Ascending aorta (tissue), 2 donors: ENCODE measurements at regions of chr13 and their contacts with region 1.

Region 1: DNA sequence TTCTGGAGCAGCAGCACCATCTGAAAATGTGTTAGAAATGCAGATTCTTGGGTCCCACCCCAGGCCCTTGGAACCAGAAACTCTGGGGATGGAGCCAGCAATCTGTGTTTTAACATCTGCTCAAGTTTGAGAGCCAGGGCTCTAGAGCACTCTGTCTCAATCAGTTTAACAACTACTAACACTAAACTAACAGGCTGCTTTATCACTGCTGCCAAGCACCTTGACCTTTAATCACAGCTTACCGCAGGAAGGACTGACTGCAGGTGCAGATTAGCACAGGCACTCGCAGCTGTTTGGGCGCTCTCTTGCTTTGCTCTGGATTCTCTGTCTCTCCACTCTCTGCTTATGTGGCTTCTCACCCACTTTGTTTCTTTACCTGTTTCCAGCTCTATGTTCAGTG is 163.5 kb downstream of the MTUS2 start:
- DNase-seq: no peak
- H3K4me3 ChIP-seq: peak overlapping the region in 1 of 2 donors; percentile 37
- H3K27ac ChIP-seq: peak overlapping the region; percentile 60 to 75
- H3K4me1 ChIP-seq: peaks cover 10 to 47% of the 10 kb centered on the region in 2 donors
- H3K27me3 ChIP-seq: no peaks in the 10 kb centered on the region
- CTCF ChIP-seq: no peak

Region 2: GRCh38 chr13:28510542-28510941 is 473.1 kb before region 1 on chr13:
- intact Hi-C with region 1: no loop called
- DNase-seq: no peak
- H3K4me3 ChIP-seq: no peak overlapping the region
- H3K27ac ChIP-seq: no peak overlapping the region
- H3K4me1 ChIP-seq: no peaks in the 10 kb centered on the region
- H3K27me3 ChIP-seq: no peaks in the 10 kb centered on the region
- CTCF ChIP-seq: no peak

Region 3: GRCh38 chr13:28953714-28954418 is 29.8 kb before region 1 on chr13:
- intact Hi-C with region 1: loop called (anchors 5 kb)
- DNase-seq: no peak
- H3K4me3 ChIP-seq: no peak overlapping the region
- H3K27ac ChIP-seq: no peak overlapping the region
- H3K4me1 ChIP-seq: no peaks in the 10 kb centered on the region
- H3K27me3 ChIP-seq: no peaks in the 10 kb centered on the region
- CTCF ChIP-seq: no peak

Region 4: DNA sequence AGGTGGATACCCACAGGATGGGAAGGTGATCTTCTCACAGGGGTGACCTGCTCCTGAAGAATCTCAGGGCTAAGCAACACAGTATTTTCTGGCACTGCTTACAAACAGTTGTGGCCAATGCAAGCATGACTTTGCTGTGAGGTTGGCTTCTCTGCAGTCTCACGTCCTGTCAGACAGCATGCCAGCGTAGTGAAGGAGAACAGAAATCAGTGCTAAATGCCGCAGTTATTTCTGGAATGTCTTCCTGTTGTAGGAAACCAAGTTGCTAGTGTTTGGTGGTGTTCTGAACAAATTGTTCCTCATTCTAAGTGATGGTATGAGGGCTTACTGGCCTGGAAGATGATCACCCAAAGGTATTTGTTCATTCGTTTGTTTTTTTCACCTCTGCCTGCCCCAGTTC is 156.6 kb after region 1 on chr13:
- intact Hi-C with region 1: loop called (anchors 5 kb)
- DNase-seq: peak; percentile 25 to 92
- H3K4me3 ChIP-seq: peak overlapping the region; percentile 33 to 61
- H3K27ac ChIP-seq: peak overlapping the region; percentile 74 to 84
- H3K4me1 ChIP-seq: peaks cover 0 to 10% of the 10 kb centered on the region in 2 donors
- H3K27me3 ChIP-seq: no peaks in the 10 kb centered on the region
- CTCF ChIP-seq: no peak

Region 5: DNA sequence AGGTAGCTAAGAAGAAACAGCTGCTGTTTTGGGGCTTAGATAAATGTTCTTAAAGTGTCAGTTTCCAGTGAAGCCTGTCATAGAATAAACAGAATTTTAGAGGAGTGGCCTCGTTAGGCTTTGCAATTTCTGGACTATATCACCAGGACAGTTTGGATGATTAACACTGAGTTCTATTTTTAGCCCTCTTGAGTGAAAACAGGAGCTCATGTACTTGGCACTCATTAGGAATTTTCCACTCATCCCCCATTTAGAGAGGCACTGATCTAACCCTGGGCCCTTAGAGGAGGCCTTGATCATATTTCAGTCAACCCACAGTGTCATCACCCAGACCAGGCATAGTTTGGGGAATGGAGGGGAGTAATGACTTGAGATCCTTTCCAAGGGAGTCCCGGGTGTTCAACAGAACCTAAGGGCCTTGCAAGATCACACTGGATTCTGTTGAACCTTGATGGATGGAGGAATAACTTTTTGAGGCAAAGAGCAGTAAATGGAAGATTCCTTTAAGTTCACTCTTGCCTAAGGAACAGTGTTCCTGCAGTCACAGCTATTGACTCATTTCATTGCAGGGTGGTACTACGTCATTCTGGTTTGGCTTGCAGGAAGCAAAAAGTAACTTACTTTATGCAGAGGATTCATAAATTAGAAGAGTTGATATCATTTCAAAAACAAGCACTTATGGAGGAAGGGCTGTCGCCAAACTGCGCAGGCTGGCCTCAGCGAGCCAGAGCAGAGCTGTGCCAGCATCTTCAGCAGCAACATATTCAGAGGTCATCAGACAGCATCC is 451.7 kb after region 1 on chr13:
- intact Hi-C with region 1: loop called (anchors 5 kb)
- DNase-seq: peak in 1 of 2 donors; percentile 63
- H3K4me3 ChIP-seq: no peak overlapping the region
- H3K27ac ChIP-seq: peak overlapping the region; percentile 88 to 90
- H3K4me1 ChIP-seq: peaks cover 22 to 59% of the 10 kb centered on the region in 2 donors
- H3K27me3 ChIP-seq: no peaks in the 10 kb centered on the region
- CTCF ChIP-seq: no peak